Naive thymus-derived CD8-positive, alpha-beta T cell (primary cell): ENCODE measurements at regions of chr19 and their contacts with region 1.

Region 1: GRCh38 chr19:58558623-58559274 is 338 bp upstream of the UBE2M start:
- DNase-seq: peak; percentile 99 to 100 (median 100)
- ATAC-seq: peak; percentile 68 to 72
- H3K4me3 Mint-ChIP-seq: peak overlapping the region; percentile 94 to 99 (median 97)
- H3K27ac Mint-ChIP-seq: peak overlapping the region; percentile 93 to 100 (median 98)
- H3K4me1 Mint-ChIP-seq: peaks cover 33 to 81% (median 80%) of the 10 kb centered on the region in 4 donors
- H3K27me3 Mint-ChIP-seq: peaks cover 0 to 2% (median 0%) of the 10 kb centered on the region in 5 donors

Region 2: GRCh38 chr19:58513694-58514563 is 44.8 kb before region 1 on chr19:
- POLR2A ChIA-PET with region 1: interaction called, 91 read pairs
- DNase-seq: peak; percentile 87 to 98 (median 94)
- ATAC-seq: peak; percentile 93 to 94
- H3K4me3 Mint-ChIP-seq: peak overlapping the region; percentile 74 to 91 (median 81)
- H3K27ac Mint-ChIP-seq: peak overlapping the region; percentile 48 to 97 (median 90)
- H3K4me1 Mint-ChIP-seq: peaks cover 19 to 43% (median 34%) of the 10 kb centered on the region in 4 donors
- H3K27me3 Mint-ChIP-seq: no peaks in the 10 kb centered on the region

Region 3: DNA sequence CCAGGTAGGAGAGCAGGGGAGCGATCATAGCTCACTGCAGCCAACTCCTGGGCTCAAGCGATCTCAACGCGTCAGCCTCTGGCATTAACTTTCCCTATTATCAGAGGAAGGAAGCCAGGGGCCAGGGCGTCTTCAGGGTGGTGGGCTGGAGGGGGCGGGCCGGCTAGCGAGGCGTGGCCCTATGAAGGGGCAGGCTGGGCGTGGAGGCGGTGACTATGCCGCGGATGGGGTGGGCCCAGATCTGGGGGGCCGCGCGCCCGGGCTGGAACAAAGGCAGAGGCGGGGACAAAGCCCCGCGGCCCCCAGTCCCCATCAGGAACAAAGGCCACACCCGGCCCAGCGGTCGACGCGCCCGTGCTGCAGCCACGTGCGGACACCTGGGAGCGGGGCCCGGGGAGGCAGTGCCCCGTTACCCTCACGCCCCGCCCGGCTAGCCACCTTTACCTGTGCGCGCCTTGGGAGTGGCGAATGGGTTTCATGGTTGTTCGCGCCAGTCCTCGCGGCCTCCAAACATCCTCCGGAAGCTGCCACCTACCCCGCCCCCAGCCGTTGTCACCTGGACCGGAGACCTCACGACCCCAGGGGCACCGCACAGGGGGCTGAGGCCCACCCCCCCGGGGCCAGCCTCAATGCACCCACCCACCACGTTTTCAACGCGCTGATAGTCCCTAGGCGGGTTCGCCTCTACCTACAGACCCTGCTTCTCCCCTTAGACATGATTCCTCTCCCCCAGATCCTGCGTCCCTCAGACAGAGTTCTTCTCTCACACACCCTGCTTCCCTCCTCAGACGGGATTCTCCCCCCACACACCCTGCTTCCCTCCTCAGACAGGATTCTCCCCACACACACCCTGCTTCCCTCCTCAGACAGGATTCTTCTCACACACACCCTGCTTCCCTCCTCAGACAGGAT is 20.2 kb before region 1 on chr19:
- POLR2A ChIA-PET with region 1: interaction called, 99 read pairs
- DNase-seq: peak in 7 of 10 donors; percentile 25 to 53 (median 46)
- ATAC-seq: peak; percentile 85 to 88
- H3K4me3 Mint-ChIP-seq: peak overlapping the region; percentile 70 to 85 (median 74)
- H3K27ac Mint-ChIP-seq: peak overlapping the region; percentile 38 to 86 (median 78)
- H3K4me1 Mint-ChIP-seq: peaks cover 6 to 16% (median 10%) of the 10 kb centered on the region in 4 donors
- H3K27me3 Mint-ChIP-seq: peaks cover 0 to 11% (median 0%) of the 10 kb centered on the region in 5 donors

Region 4: DNA sequence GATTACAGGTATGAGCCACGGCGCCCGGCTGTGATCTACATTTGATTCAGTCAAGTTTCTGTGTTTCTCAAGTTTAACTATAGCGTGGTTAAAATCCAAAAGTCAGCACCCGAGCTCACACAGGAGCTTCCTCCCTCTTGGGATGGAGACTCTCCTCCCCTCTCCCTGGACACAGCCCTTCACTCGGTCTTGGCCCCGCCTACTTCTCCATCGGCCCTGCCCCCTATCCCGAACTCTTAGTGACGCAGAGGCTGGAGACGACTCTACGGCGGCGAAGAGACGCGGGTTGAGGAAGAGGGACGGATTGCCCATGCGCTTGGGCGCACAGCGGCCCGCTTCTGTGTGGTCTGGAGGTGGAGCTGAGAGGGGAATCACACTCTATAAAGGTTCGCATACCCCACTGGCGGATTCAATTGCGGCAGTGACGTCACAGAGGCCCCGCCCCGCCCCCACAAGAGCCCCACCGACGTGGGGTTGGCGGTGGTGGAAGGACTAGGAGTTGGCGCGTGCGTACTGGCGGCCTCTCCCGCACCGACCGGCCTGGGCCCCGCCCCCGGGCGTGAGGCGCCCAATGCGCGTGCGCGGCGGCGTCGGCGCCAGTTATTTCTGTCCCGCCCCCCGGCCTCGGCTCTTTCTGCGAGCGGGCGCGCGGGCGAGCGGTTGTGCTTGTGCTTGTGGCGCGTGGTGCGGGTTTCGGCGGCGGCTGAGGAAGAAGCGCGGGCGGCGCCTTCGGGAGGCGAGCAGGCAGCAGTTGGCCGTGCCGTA is 14.7 kb before region 1 on chr19 and contains the start of gene TRIM28:
- POLR2A ChIA-PET with region 1: interaction called, 99 read pairs
- DNase-seq: peak; percentile 99 to 100 (median 100)
- ATAC-seq: peak; percentile 90 to 92
- H3K4me3 Mint-ChIP-seq: peak within 1 kb of the TSS; percentile 91 to 97 (median 96)
- H3K27ac Mint-ChIP-seq: peak within 1 kb of the TSS; percentile 97 to 100 (median 99)
- H3K4me1 Mint-ChIP-seq: peaks cover 26 to 38% (median 32%) of the 10 kb centered on the region in 4 donors
- H3K27me3 Mint-ChIP-seq: peaks cover 0 to 11% (median 4%) of the 10 kb centered on the region in 5 donors
- polyA plus RNA-seq, gene TRIM28: 55.7 to 114 (median 62.7) TPM

Region 5: GRCh38 chr19:58572818-58573657 is 14.3 kb after region 1 on chr19 and contains the start of gene MZF1:
- POLR2A ChIA-PET with region 1: interaction called, 68 read pairs
- DNase-seq: peak; percentile 96 to 100 (median 100)
- ATAC-seq: peak; percentile 70 to 76
- H3K4me3 Mint-ChIP-seq: peak within 1 kb of the TSS; percentile 88 to 100 (median 98)
- H3K27ac Mint-ChIP-seq: peak within 1 kb of the TSS; percentile 99 to 100 (median 100)
- H3K4me1 Mint-ChIP-seq: peaks cover 29 to 55% (median 45%) of the 10 kb centered on the region in 4 donors
- H3K27me3 Mint-ChIP-seq: peaks cover 0 to 5% (median 0%) of the 10 kb centered on the region in 5 donors
- polyA plus RNA-seq, gene MZF1: 9.1 to 12.7 (median 11.7) TPM